Spleen (tissue), 13 donors: ENCODE measurements at regions of chr22 and their contacts with region 1.

Region 1: DNA sequence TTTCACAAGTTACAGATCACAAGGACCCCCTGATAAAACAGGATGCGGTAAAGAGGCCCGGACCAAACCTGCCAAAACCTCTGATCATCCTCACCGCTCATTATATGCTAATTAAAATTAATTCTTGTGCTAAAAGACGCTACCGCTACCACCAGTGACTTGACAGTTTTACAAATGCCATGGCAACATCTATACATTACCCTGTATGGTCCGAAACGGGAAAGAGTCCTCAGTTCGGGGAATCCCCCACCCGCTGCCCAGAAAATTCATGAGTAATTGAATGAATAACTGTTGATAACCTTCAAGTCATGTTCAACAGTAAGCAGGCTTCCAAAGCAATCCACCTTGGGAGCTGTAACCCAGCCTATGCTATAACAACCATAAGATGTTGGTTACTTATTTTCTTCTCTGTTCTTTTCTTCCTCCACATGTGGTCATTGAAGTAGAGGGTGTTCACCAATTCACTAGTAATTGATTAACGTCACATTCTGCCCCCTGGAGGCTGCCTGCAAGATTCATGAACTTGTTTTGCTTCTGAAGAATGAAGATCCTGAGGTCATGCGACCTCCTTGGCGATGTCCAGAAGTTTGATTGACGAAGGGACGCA is 20.6 kb downstream of the APOBEC3H start:
- DNase-seq: peak; percentile 83
- H3K4me3 ChIP-seq: peak overlapping the region in 2 of 8 donors; percentile 7 to 46
- H3K27ac ChIP-seq: peak overlapping the region in 7 of 8 donors; percentile 4 to 78 (median 54)
- H3K4me1 ChIP-seq: peaks cover 6 to 47% (median 41%) of the 10 kb centered on the region in 6 donors
- H3K27me3 ChIP-seq: no peaks in the 10 kb centered on the region
- CTCF ChIP-seq: peak; percentile 32 to 77 (median 68)
- POLR2A ChIP-seq: no peak

Region 2: DNA sequence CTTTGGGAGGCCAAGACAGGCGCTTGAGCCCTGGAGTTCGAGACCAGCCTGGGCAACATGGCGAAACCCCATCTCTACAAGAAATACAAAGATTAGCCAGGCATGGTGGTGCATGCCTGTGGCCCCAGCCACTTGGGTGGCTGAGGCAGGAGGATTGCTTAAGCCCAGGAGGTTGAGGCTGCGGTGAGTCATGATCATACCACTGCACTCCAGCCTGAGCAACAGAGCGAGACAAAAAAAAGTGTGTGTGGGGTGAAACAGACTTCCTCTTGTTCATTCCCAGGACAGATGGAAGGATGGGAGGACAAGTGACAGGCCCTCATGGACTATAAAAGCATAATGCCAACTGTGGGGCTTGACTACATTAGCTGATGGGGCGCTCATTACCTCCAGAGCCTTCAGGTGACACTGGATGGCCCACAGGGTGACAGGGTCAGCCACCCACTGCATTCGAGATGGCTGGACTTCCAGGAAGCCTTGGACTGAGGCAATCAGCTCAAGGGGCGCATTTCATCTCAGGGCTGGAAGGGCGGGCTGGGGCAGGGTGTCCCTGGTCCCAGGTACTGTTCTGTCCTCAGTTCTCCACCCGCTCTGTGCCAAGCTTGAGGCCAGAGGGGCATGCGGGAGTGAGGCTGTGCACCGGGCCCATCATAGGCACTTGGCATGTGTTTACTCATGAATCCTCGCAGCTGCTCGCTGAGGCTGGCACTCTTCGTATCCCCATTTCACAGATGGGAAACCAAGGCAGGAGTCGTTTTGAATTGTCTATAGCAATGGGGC is 286.3 kb before region 1 on chr22:
- intact Hi-C with region 1: no loop called
- DNase-seq: peak; percentile 52
- H3K4me3 ChIP-seq: no peak overlapping the region
- H3K27ac ChIP-seq: no peak overlapping the region
- H3K4me1 ChIP-seq: no peaks in the 10 kb centered on the region
- H3K27me3 ChIP-seq: peaks cover 0 to 21% (median 0%) of the 10 kb centered on the region in 7 donors
- CTCF ChIP-seq: no peak
- POLR2A ChIP-seq: no peak

Region 3: DNA sequence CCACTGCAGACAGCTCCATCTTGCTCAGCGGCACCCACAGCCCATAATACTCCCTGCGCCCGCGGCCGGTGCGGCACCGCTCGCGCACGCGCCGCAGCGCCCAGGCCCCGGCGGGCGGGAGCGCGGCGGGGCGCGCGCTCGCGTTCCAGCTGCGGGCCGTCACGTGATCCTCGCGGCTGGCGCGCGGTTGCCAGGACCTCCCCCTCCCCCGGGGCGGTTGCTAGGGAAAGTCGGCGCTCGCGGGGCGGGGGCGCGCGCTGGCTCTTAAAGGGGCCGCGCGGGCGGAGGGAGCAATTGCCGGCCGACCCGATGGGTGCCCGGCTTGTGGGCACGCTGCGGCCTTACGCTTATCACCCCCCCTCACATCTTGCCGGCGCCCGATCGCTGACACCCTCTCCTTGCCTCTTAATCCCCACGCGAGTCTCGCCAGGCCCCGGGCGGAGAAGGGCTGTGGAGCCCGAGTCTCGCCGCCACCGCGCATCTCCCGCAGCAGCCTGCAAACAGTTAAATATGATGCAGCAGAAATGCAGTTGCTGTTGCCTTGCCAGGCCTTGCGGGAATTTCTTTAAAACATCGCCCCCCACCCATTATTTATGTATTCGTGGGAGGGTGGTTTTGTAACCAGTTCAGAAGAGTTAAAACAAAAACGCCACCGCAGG is 245.4 kb before region 1 on chr22 and contains the start of gene CBX6:
- intact Hi-C with region 1: loop called (anchors 5 kb)
- DNase-seq: peak; percentile 98
- H3K4me3 ChIP-seq: peak within 1 kb of the TSS; percentile 59 to 91 (median 76)
- H3K27ac ChIP-seq: peak within 1 kb of the TSS; percentile 81 to 94 (median 90)
- H3K4me1 ChIP-seq: peaks cover 34 to 63% (median 47%) of the 10 kb centered on the region in 6 donors
- H3K27me3 ChIP-seq: peaks cover 0 to 5% (median 0%) of the 10 kb centered on the region in 7 donors
- CTCF ChIP-seq: no peak
- POLR2A ChIP-seq: peak in 1 of 3 donors; percentile 77
- total RNA-seq, gene CBX6: 35.8 to 72.2 (median 49.2) TPM

Region 4: GRCh38 chr22:39175952-39176713 is 58.4 kb after region 1 on chr22:
- intact Hi-C with region 1: no loop called
- DNase-seq: peak; percentile 82
- H3K4me3 ChIP-seq: no peak overlapping the region
- H3K27ac ChIP-seq: peak overlapping the region; percentile 68 to 94 (median 88)
- H3K4me1 ChIP-seq: peaks cover 41 to 91% (median 85%) of the 10 kb centered on the region in 6 donors
- H3K27me3 ChIP-seq: no peaks in the 10 kb centered on the region
- CTCF ChIP-seq: no peak
- POLR2A ChIP-seq: no peak

Region 5: GRCh38 chr22:39283322-39284004 is 165.8 kb after region 1 on chr22:
- intact Hi-C with region 1: no loop called
- DNase-seq: peak; percentile 88
- H3K4me3 ChIP-seq: no peak overlapping the region
- H3K27ac ChIP-seq: peak overlapping the region; percentile 27 to 80 (median 74)
- H3K4me1 ChIP-seq: peaks cover 29 to 63% (median 50%) of the 10 kb centered on the region in 6 donors
- H3K27me3 ChIP-seq: peaks cover 0 to 12% (median 0%) of the 10 kb centered on the region in 7 donors
- CTCF ChIP-seq: no peak
- POLR2A ChIP-seq: no peak